Activated naive CD4-positive, alpha-beta T cell treated with anti-CD3 and anti-CD28 coated beads for 36 hours (primary cell): ENCODE measurements at regions of chr7 and their contacts with region 1.

Region 1: GRCh38 chr7:24290004-24290641 is 6.1 kb downstream of the NPY start:
- DNase-seq: peak; percentile 74
- H3K4me3 Mint-ChIP-seq: no peak overlapping the region
- H3K27ac Mint-ChIP-seq: no peak overlapping the region
- H3K4me1 Mint-ChIP-seq: peaks cover 12% of the 10 kb centered on the region
- H3K27me3 Mint-ChIP-seq: peaks cover 29% of the 10 kb centered on the region

Region 2: DNA sequence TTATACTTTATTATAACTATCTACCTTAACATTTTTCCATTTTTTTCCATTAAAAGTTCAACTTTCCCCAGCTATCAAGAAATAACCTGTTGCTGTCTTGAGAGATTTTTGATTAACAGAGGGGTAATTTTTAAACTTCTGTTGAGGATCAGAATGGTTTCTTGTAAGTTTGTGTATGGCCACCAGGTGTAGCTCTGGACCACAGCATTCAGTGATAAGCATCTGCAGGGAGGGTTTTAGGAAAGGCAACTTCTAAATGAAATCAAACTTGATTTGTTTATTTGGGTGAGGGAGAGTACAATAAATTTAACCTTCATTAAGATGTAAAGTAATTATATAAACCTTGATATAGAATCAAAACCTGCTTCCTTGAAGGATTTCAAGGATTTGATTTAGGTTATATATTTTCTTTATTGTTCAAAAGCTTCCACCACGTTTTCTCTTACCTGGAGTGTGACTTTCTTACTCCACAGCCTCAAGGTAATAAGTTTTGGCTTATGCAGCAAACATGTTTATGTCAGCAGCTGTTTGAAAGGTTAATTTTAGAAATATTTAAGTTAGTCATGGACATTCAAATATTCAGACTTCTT is 426.8 kb before region 1 on chr7:
- CTCF ChIA-PET with region 1: no interaction called
- intact Hi-C with region 1: loop called (anchors 1 kb)
- DNase-seq: peak; percentile 46
- H3K4me3 Mint-ChIP-seq: no peak overlapping the region
- H3K27ac Mint-ChIP-seq: no peak overlapping the region
- H3K4me1 Mint-ChIP-seq: no peaks in the 10 kb centered on the region
- H3K27me3 Mint-ChIP-seq: peaks cover 8% of the 10 kb centered on the region

Region 3: GRCh38 chr7:24381894-24382505 is 91.9 kb after region 1 on chr7:
- CTCF ChIA-PET with region 1: interaction called, 3 read pairs
- intact Hi-C with region 1: loop called (anchors 1 kb)
- DNase-seq: no peak
- H3K4me3 Mint-ChIP-seq: no peak overlapping the region
- H3K27ac Mint-ChIP-seq: no peak overlapping the region
- H3K4me1 Mint-ChIP-seq: no peaks in the 10 kb centered on the region
- H3K27me3 Mint-ChIP-seq: no peaks in the 10 kb centered on the region

Region 4: GRCh38 chr7:24587848-24588247 is 297.7 kb after region 1 on chr7:
- CTCF ChIA-PET with region 1: no interaction called
- intact Hi-C with region 1: loop called (anchors 2 kb)
- DNase-seq: peak; percentile 64
- H3K4me3 Mint-ChIP-seq: no peak overlapping the region
- H3K27ac Mint-ChIP-seq: no peak overlapping the region
- H3K4me1 Mint-ChIP-seq: peaks cover 34% of the 10 kb centered on the region
- H3K27me3 Mint-ChIP-seq: no peaks in the 10 kb centered on the region